Left lung (tissue), 14 donors: ENCODE measurements at regions of chr22 and their contacts with region 1.

Region 1: DNA sequence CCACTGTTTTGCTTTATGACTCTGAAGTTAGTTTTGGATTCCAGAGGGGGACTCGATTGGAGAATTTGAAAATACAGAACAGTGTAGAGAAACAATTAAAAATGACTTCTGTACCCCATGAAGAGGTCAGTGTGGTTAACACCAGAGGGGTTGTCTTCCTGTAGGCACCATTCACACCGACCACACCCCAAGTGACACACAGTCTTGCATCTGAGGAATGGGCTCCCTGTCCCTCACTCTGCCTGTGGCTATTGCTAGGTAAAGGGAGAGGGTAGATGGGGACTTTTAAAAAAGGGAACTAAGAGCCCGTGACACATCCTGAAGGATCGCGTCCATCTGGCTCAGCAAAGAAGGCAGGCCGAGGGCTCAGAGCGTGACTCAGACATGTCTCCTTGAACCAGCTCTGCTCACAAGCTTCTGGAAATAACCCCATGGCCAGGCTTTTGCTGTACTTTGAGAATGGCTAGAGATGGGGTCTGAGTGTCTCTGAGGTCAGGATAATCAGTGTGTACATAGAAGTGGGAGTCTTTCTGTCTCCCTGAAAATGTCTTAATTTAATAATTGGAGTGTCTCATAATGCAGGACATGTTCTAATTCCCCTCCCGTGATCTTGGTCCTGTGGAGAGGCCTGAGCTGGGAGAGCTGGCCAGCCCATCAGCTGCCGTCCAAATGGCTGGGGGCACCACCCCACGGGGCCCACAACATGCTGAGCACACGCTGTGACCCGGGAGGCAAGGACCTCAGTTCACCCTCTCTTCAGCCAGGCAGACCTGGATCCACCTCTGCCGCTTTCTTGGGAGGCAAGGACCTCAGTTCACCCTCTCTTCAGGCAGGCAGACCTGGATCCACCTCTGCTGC is 39.3 kb downstream of the SGSM1 start:
- DNase-seq: no peak
- ATAC-seq: no peak
- H3K4me3 ChIP-seq: no peak overlapping the region
- H3K27ac ChIP-seq: no peak overlapping the region
- H3K4me1 ChIP-seq: no peaks in the 10 kb centered on the region
- H3K27me3 ChIP-seq: no peaks in the 10 kb centered on the region
- CTCF ChIP-seq: no peak

Region 2: DNA sequence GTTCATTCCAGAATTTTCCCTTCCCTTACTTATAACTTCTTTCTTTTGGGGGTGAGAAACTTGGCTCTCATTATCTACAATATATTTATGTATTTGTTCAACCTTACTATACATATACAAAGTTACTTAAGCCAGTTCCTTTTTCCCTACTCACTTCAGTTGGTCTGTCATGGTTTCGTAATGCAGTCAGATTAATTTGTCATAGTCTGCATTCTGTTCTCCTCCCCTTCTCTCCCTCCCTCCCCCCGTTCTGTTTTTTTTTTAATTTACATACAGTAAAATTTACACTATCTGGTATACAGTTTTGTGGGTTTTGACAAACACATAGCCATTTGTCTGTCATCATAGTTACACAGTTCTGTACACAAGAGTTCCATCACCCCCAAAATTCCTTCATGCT is 489.7 kb before region 1 on chr22:
- intact Hi-C with region 1: no loop called
- DNase-seq: no peak
- ATAC-seq: peak; percentile 46
- H3K4me3 ChIP-seq: no peak overlapping the region
- H3K27ac ChIP-seq: peak overlapping the region in 1 of 2 donors; percentile 14
- H3K4me1 ChIP-seq: peaks cover 0 to 20% of the 10 kb centered on the region in 2 donors
- H3K27me3 ChIP-seq: no peaks in the 10 kb centered on the region
- CTCF ChIP-seq: no peak

Region 3: GRCh38 chr22:24768537-24769374 is 76.5 kb before region 1 on chr22:
- intact Hi-C with region 1: loop called in 1 of 2 experiments (anchors 5 kb)
- DNase-seq: peak in 3 of 4 donors; percentile 33 to 60 (median 38)
- ATAC-seq: peak; percentile 98
- H3K4me3 ChIP-seq: no peak overlapping the region
- H3K27ac ChIP-seq: no peak overlapping the region
- H3K4me1 ChIP-seq: no peaks in the 10 kb centered on the region
- H3K27me3 ChIP-seq: peaks cover 0 to 5% of the 10 kb centered on the region in 2 donors
- CTCF ChIP-seq: peak; percentile 61 to 67

Region 4: GRCh38 chr22:24969560-24970301 is 124.5 kb after region 1 on chr22:
- intact Hi-C with region 1: no loop called
- DNase-seq: no peak
- ATAC-seq: peak; percentile 4
- H3K4me3 ChIP-seq: no peak overlapping the region
- H3K27ac ChIP-seq: peak overlapping the region in 1 of 2 donors; percentile 65
- H3K4me1 ChIP-seq: peaks cover 4 to 38% of the 10 kb centered on the region in 2 donors
- H3K27me3 ChIP-seq: no peaks in the 10 kb centered on the region
- CTCF ChIP-seq: no peak

Region 5: DNA sequence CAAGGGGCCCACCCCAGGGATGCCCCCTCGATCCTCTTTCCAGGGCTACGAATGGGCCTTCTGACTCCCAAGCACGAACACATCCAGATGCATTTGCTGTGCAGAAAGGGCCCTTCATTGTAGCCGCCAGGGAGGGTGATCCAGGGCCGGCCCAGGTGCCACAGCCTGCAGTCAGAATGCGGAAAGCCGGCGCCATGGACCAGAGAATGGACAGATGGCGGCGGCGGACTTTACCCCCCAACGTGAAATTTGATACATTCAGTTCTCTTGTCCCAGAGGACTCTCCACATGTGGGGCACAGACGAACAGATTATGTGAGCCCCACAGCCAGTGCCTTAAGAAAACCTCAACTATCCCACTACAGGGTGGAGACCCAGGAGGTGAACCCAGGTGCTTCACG is 194.5 kb after region 1 on chr22:
- intact Hi-C with region 1: no loop called
- DNase-seq: no peak
- ATAC-seq: no peak
- H3K4me3 ChIP-seq: no peak overlapping the region
- H3K27ac ChIP-seq: no peak overlapping the region
- H3K4me1 ChIP-seq: no peaks in the 10 kb centered on the region
- H3K27me3 ChIP-seq: no peaks in the 10 kb centered on the region
- CTCF ChIP-seq: no peak

Region 6: DNA sequence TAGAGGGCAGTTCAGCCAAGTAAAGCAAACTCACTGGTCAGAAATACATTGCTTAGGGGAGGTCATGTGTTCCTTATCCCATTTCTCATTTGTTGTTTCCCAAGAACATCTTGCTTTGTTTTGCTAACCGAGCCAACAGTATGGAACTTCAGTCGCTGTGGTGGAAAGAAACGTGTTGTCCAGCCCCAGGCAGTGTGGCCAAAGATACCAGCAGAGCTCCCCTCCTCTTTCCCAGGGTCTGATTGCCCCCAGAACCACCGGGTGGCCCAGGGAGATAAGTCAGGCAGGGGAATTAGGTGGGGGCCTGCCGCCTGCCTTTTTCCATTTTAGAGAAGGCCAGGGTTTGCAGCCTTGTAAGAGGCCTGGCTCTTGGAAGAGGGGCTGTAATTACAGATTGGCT is 255.7 kb after region 1 on chr22:
- intact Hi-C with region 1: no loop called
- DNase-seq: no peak
- ATAC-seq: no peak
- H3K4me3 ChIP-seq: no peak overlapping the region
- H3K27ac ChIP-seq: no peak overlapping the region
- H3K4me1 ChIP-seq: no peaks in the 10 kb centered on the region
- H3K27me3 ChIP-seq: no peaks in the 10 kb centered on the region
- CTCF ChIP-seq: no peak